Tibial artery (tissue), 4 donors: ENCODE measurements at regions of chr1 and their contacts with region 1.

Region 1: DNA sequence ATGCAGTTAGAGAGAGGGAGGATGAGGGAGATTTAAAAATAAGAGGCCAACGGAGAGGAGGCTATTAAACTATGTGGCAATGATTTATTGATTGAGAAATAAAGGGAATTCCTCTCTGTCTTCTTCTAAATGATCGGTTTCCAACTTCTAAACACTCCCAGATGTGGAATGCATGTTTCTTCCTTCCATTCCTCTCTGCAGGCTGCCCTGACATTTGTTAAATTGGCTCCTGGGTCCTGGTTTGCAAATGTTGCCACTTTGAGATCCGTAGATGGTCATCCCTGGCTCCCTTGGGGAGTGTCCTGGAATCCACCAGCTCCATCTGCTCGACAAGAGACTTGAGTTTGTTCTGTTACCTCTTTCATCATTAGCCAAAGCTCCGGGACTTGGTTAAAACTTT is 10.3 kb upstream of the C1orf198 start:
- DNase-seq: peak; percentile 73 to 85
- H3K4me3 ChIP-seq: no peak overlapping the region
- H3K27ac ChIP-seq: peak overlapping the region in 1 of 2 donors; percentile 32
- H3K4me1 ChIP-seq: peaks cover 0 to 21% (median 12%) of the 10 kb centered on the region in 4 donors
- H3K27me3 ChIP-seq: no peaks in the 10 kb centered on the region
- CTCF ChIP-seq: no peak

Region 2: DNA sequence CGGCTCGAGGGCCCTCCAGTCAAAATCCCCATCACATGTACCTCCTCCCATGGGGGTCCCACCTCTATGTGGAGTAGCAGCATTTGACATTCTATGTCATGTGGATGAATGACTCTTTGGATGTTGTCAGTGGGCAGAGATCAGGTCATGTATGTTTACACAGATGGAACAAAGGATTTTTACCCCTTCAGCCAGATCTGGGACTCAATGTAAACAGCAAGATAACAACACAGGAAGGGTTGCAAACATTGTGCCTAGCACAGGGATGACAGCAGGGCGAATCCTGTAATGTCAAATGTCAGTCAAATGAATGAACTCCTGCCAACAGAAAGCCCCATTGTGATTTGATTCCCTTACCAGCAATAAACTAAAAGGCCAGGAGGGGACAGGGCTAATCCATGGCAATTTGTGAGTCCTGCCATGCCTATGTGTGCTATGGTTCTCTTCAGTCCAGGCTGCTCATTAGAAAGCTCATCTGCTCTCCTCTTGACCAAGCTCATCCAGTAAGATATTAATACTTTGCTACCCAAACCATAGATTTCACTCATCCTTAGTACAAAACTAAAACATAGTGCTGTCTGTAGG is 512.8 kb before region 1 on chr1:
- intact Hi-C with region 1: no loop called
- DNase-seq: no peak
- H3K4me3 ChIP-seq: no peak overlapping the region
- H3K27ac ChIP-seq: no peak overlapping the region
- H3K4me1 ChIP-seq: no peaks in the 10 kb centered on the region
- H3K27me3 ChIP-seq: peaks cover 0 to 13% of the 10 kb centered on the region in 2 donors
- CTCF ChIP-seq: no peak

Region 3: GRCh38 chr1:230517786-230518185 is 360.8 kb before region 1 on chr1:
- intact Hi-C with region 1: no loop called
- DNase-seq: no peak
- H3K4me3 ChIP-seq: no peak overlapping the region
- H3K27ac ChIP-seq: no peak overlapping the region
- H3K4me1 ChIP-seq: no peaks in the 10 kb centered on the region
- H3K27me3 ChIP-seq: no peaks in the 10 kb centered on the region
- CTCF ChIP-seq: no peak

Region 4: DNA sequence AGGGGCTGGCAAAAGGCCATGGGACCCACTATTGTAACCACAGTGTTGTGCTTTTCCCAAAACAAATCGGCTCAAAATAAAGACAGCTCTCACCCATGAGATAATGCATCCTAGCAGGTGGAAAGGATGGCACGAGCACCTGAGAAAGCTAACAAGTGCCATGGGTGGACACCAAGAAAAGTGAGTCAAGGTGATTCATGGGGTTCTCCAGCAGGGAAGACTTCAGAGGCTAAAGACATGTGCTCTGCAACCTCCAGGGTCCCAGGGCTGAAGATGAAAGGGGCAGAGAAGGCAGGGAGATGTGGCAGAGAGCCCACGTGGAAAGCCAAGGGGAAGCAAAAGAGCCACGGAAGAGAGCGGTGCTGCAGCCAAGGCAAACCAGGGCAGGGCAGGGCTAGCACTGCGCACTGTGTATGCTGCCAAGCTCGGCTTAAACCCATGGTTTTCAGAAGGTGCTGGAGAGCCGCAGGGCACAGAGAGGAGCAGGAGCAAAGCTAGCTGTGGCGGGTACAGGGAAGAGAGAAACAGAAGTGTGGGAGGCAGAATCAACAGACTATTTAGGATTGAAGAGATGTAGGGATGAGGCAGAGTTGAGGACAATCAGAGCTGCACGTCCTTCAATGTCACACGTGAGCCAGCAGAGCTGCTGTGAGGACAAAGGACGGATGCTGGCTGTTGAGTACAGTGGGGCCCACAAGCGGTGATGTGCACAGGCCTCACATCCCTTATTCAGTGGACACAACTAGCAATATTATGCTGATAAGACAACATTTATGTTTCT is 31.6 kb after region 1 on chr1:
- intact Hi-C with region 1: loop called (anchors 5 kb)
- DNase-seq: peak in 1 of 2 donors; percentile 87
- H3K4me3 ChIP-seq: no peak overlapping the region
- H3K27ac ChIP-seq: peak overlapping the region; percentile 54 to 59
- H3K4me1 ChIP-seq: peaks cover 0 to 44% (median 27%) of the 10 kb centered on the region in 4 donors
- H3K27me3 ChIP-seq: no peaks in the 10 kb centered on the region
- CTCF ChIP-seq: no peak